Ascending aorta (tissue), 2 donors: ENCODE measurements at regions of chr9 and their contacts with region 1.

Region 1: GRCh38 chr9:26975693-26976059 is 19.5 kb downstream of the IFT74 start:
- DNase-seq: no peak
- H3K4me3 ChIP-seq: no peak overlapping the region
- H3K27ac ChIP-seq: no peak overlapping the region
- H3K4me1 ChIP-seq: no peaks in the 10 kb centered on the region
- H3K27me3 ChIP-seq: no peaks in the 10 kb centered on the region
- CTCF ChIP-seq: peak in 2 of 3 experiments; percentile 25 to 60

Region 2: DNA sequence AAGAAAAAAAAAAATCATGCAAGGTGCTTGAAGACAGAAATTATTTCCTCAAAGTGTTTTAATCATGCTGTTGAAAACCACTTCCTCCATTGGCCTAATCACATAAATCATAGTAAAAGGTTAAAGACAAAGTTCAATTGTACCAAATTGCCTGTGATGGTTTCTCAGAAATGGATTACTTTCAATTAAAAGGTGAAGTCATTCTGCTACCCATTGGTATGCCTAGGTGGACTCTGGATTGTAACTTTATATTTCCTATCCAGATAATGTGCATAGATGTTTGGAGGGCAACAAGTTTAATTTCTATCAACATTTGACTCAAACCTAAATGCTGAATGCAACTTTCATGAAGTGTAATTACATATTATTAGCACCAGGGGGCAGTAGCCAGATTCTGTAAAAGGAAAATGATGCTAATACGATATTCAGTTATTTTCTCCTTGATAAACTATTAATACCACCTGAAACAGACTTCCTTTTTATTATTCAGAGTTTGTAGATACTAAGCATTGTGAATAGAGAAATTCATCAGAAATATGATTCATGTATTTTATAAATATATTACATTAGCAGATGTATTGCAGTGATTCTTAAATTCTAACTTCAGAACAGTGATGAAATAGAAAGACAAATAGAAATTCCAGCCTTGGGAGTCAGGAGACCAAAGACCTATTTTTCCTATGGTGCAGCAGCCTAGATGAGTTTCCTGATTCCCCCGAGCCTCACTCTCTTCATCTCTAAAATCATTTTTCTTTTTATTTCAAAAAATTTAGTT is 231.3 kb before region 1 on chr9:
- intact Hi-C with region 1: loop called (anchors 5 kb)
- DNase-seq: no peak
- H3K4me3 ChIP-seq: no peak overlapping the region
- H3K27ac ChIP-seq: no peak overlapping the region
- H3K4me1 ChIP-seq: no peaks in the 10 kb centered on the region
- H3K27me3 ChIP-seq: no peaks in the 10 kb centered on the region
- CTCF ChIP-seq: peak in 2 of 3 experiments; percentile 63 to 71

Region 3: DNA sequence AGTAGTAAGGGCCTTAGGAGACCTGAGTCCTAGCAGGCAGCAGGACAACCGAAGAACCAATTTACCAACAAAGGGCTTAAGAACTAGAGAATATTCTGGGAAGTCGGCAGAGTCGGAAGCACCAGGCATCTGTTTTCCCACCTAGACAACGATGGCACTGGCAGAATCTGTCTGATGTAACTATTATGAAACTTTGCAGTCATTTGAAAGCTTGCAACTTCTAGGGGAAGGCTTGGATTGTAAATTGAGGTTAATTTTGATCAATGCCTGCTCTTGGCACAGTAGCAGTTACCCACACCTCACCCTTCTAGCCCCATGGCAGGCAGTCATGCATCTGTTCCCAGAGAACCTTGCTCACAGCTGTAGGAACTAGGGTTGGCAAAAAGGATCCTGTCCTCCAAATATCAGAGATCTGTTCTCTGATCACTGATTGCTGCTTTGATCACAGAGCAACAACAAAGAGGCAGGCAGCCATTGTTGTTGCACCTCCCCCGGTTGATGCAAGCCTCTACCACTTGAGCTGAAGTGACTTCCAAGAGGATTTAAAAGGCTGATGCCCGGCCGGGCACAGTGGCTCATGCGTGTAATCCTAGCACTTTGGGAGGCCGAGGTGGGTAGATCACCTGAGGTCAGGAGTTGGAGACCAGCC is 39.3 kb before region 1 on chr9:
- intact Hi-C with region 1: loop called (anchors 5 kb)
- DNase-seq: no peak
- H3K4me3 ChIP-seq: no peak overlapping the region
- H3K27ac ChIP-seq: no peak overlapping the region
- H3K4me1 ChIP-seq: no peaks in the 10 kb centered on the region
- H3K27me3 ChIP-seq: no peaks in the 10 kb centered on the region
- CTCF ChIP-seq: no peak